ENCODE measurements at regions of chr6 and their contacts with region 1.

Region 1: GRCh38 chr6:102229271-102229670 is 835.8 kb downstream of the GRIK2 start:
- DNase-seq: no peak
- H3K4me3 Mint-ChIP-seq: no peak overlapping the region
- H3K27ac Mint-ChIP-seq: no peak overlapping the region
- H3K4me1 Mint-ChIP-seq: no peaks in the 10 kb centered on the region
- H3K27me3 Mint-ChIP-seq: no peaks in the 10 kb centered on the region

Region 2: GRCh38 chr6:102273686-102274085 is 44.4 kb after region 1 on chr6:
- intact Hi-C with region 1: loop called (anchors 1 kb)
- DNase-seq: no peak
- H3K4me3 Mint-ChIP-seq: no peak overlapping the region
- H3K27ac Mint-ChIP-seq: no peak overlapping the region
- H3K4me1 Mint-ChIP-seq: no peaks in the 10 kb centered on the region
- H3K27me3 Mint-ChIP-seq: no peaks in the 10 kb centered on the region